ENCODE measurements at regions of chr1 and their contacts with region 1.

Region 1: DNA sequence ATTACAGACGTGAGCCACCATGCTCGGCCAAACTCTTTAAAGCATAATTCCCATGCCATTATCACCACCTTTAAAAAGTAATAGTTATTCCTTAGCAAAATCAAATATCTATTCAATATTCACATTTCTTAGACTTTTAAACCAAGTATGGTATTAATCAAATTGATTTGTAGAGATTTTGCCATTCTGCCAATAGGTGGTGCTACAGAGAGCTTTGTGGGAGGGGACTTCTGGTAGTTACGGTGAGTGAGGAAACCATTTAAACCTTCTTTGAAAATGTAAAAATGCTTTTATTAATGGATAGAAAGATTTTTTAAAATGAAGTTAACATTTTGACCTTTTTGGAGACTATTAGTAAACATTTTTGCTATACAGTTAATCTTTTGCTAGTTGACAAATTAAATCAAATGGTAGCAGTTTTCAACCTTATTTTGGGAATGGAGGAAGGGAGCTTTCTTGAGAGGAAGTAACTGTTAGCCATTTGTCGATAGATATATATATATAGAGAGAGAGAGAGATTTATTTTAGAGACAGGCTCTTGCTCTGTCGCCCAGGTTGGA is 19.3 kb downstream of the IARS2 start:
- DNase-seq: peak; percentile 45 to 62 (median 51)
- H3K4me3 ChIP-seq: no peak overlapping the region
- H3K4me3 Mint-ChIP-seq: peak overlapping the region in 5 of 8 donors; percentile 0 to 43 (median 22)
- H3K27ac ChIP-seq: no peak overlapping the region
- H3K27ac Mint-ChIP-seq: peak overlapping the region in 6 of 7 donors; percentile 0 to 83 (median 36)
- H3K4me1 ChIP-seq: no peaks in the 10 kb centered on the region
- H3K4me1 Mint-ChIP-seq: peaks cover 0 to 10% (median 4%) of the 10 kb centered on the region in 4 donors
- H3K27me3 ChIP-seq: no peaks in the 10 kb centered on the region
- H3K27me3 Mint-ChIP-seq: no peaks in the 10 kb centered on the region

Region 2: DNA sequence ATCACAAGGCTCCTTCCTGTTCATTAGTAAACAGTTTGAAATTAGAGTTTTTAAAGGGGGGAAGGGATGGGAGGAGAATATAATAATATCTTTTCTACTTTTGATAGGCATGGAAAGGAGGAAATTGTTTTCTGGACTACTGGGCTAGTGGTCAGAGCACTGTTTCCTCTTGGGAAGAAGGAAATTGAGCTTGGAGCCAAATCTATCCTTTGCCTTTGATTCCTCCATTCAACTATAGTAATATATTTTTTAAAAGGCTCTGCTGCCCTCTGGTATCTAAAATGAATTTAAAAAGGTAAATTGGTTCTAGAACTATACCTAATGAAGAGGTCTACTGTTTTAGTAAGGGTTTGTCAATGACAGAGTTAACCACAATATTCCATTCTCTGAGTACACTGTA is 13.4 kb before region 1 on chr1:
- CTCF ChIA-PET with region 1: interaction called, 13 read pairs
- POLR2A ChIA-PET with region 1: no interaction called
- intact Hi-C with region 1: no loop called
- DNase-seq: no peak
- H3K4me3 ChIP-seq: no peak overlapping the region
- H3K4me3 Mint-ChIP-seq: no peak overlapping the region
- H3K27ac ChIP-seq: no peak overlapping the region
- H3K27ac Mint-ChIP-seq: peak overlapping the region in 5 of 7 donors; percentile 25 to 83 (median 49)
- H3K4me1 ChIP-seq: peaks cover 12% of the 10 kb centered on the region
- H3K4me1 Mint-ChIP-seq: peaks cover 14 to 30% (median 22%) of the 10 kb centered on the region in 4 donors
- H3K27me3 ChIP-seq: no peaks in the 10 kb centered on the region
- H3K27me3 Mint-ChIP-seq: no peaks in the 10 kb centered on the region

Region 3: DNA sequence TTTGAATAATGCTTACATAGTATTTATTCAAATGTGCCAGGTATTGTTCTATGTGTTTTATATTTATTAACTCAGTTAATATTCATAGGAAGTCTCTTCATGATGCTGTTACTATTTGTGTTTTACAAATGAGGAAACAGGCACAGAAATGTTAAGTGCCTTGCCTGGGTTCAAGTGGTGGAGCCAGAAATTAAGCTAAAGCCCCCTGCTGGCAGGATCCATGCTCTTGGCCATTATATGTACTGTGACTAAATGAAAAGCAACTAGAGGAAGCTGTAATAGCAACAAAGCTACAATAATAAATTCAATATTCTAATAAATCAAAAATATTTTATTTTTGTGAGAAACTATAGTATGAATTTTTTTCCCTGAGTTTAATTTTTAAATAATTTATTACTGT is 10.7 kb after region 1 on chr1:
- CTCF ChIA-PET with region 1: interaction called, 40 read pairs
- POLR2A ChIA-PET with region 1: no interaction called
- intact Hi-C with region 1: no loop called
- DNase-seq: no peak
- H3K4me3 ChIP-seq: no peak overlapping the region
- H3K4me3 Mint-ChIP-seq: no peak overlapping the region
- H3K27ac ChIP-seq: no peak overlapping the region
- H3K27ac Mint-ChIP-seq: peak overlapping the region in 1 of 7 donors; percentile 37
- H3K4me1 ChIP-seq: no peaks in the 10 kb centered on the region
- H3K4me1 Mint-ChIP-seq: peaks cover 6 to 11% (median 8%) of the 10 kb centered on the region in 4 donors
- H3K27me3 ChIP-seq: no peaks in the 10 kb centered on the region
- H3K27me3 Mint-ChIP-seq: no peaks in the 10 kb centered on the region

Region 4: DNA sequence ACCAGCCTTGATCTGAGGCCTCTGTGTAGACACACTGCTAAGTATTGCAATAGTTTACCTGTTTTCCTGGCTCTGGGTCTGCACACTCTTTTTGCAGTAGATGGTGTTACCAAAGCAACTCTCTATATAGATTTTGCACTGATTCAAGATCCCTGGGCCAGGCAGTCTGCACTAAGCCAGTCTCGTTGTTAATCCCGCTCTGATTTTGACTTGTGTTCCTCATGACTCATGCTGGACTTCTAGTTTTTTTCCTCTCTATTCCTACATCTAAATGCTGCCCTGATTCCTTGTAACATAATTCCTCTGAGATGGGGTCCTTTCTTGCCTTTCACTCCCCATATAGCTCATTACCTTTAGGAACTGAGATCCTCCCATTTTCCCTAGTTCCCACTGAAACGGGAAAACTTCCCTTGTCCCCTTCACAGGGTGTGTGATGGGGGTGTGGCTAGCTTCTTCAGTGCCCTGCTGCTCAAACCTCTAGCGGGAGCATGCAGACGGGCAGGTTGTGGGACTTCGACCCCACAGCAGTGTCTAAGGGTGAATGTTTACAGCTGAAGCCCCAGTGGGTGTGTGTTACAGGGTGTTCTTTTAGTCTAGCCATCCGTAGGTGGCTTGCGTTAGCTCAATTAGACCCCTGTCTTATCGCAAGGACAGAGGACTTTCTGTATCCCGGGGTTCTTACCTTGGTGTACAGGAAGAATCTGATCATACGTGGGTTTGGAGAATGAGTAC is 265.5 kb after region 1 on chr1:
- CTCF ChIA-PET with region 1: no interaction called
- POLR2A ChIA-PET with region 1: no interaction called
- intact Hi-C with region 1: no loop called
- DNase-seq: no peak
- H3K4me3 ChIP-seq: no peak overlapping the region
- H3K4me3 Mint-ChIP-seq: no peak overlapping the region
- H3K27ac ChIP-seq: no peak overlapping the region
- H3K27ac Mint-ChIP-seq: no peak overlapping the region
- H3K4me1 ChIP-seq: no peaks in the 10 kb centered on the region
- H3K4me1 Mint-ChIP-seq: no peaks in the 10 kb centered on the region
- H3K27me3 ChIP-seq: no peaks in the 10 kb centered on the region
- H3K27me3 Mint-ChIP-seq: peaks cover 11 to 15% of the 10 kb centered on the region in 2 donors